Activated T-helper 1 cell treated with anti-CD3 and anti-CD28 coated beads, Interleukin-12 subunit alpha, Interleukin-12 subunit beta, Interleukin-2, Interleukin-4 antibody, amounts not matched to agents 30 ng/mL and 10 ng/mL and 1 ng/mL, durations not matched to agents 14 hours and 24 hours and 36 hours (primary cell): ENCODE measurements at regions of chr16 and their contacts with region 1.

Region 1: GRCh38 chr16:4475880-4476788 is at the start of gene HMOX2:
- DNase-seq: peak; percentile 93
- H3K4me3 Mint-ChIP-seq: peak within 1 kb of the TSS; percentile 89
- H3K27ac Mint-ChIP-seq: peak within 1 kb of the TSS; percentile 89
- H3K4me1 Mint-ChIP-seq: peaks cover 21% of the 10 kb centered on the region
- H3K27me3 Mint-ChIP-seq: no peaks in the 10 kb centered on the region
- total RNA-seq, gene HMOX2: 64.7 and 68.4 TPM in 2 replicates

Region 2: GRCh38 chr16:4081521-4082021 is 394.6 kb before region 1 on chr16:
- intact Hi-C with region 1: no loop called
- DNase-seq: no peak
- H3K4me3 Mint-ChIP-seq: peak overlapping the region; percentile 54
- H3K27ac Mint-ChIP-seq: no peak overlapping the region
- H3K4me1 Mint-ChIP-seq: peaks cover 56% of the 10 kb centered on the region
- H3K27me3 Mint-ChIP-seq: no peaks in the 10 kb centered on the region

Region 3: DNA sequence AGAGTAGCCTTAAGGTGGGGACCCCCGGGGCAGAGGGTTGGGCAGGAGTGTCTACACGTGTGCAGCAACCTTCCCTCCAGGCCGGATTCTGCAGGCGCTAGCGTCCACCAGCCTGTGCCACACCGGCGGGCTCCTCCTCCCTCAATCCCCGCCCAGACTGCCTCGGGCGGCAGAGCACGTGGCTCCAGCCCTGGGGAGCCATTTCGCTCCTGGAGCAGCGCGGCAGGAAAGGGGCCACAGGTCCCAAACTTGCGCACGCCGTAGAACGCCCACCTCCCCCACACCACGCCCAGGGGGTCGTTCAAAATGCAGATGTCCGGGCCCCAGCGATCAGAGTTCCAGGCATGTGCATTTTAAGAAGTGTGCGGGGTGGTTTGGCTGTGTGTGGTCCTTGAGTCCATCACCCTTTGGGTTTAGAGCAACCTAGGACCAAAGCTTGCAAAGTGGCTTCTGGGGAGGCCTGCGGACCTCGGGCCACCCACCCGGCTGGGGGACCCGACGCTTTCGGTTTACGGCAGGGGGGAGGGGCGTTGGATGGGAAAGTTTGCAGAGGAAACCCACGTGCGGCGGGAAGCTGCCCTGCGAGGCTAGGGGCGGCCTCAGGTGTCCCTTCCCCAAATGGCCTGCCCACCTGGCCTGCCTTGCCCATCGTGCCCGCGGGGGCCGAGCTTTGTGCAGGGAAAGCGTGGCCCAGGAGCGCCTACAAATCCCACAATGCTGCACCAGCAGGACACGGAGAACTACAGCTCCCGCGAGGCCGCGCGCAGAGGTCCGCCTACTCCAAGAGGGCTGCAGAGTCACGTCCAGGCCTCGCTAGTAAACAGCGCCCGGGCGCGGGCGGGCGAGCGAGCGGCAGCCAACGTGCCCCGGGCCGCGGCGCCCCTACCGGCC is 204.7 kb before region 1 on chr16:
- intact Hi-C with region 1: loop called (anchors 5 kb)
- DNase-seq: peak; percentile 85
- H3K4me3 Mint-ChIP-seq: peak overlapping the region; percentile 88
- H3K27ac Mint-ChIP-seq: peak overlapping the region; percentile 94
- H3K4me1 Mint-ChIP-seq: peaks cover 7% of the 10 kb centered on the region
- H3K27me3 Mint-ChIP-seq: peaks cover 2% of the 10 kb centered on the region

Region 4: DNA sequence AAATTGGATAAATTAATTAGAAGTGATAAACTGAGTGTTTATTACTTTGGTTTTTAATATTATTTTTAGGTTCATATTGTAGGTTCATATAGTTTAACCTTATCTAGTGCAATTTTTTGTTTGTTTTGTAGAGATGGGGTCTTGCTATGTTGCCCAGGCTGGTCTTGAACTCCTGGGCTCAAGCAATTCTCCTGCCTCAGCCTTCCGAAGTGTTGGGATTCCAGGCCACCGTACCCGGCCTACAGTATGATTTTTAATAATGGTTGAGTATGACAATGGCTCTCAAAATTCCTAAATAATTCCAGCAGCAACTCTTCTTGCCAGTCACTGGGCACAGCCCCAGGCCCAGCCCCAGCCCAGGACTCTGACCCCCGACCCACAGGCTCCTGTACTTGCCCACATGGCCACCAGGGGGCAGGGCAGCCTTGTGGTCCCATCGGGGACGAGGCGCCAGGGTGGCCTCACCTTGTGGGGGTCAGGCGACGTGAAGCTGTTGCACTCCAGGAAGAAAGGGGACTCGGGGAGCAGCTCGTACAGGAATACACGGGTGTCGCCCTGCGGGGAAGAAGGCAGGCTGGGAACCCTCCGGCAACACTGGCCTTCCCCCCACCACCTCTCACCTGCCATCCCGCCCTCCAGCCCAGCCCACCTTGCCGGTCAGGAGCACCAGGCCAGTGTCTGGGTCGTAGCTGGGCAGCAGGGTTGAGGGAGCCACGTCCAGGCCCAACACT is 117.1 kb before region 1 on chr16:
- intact Hi-C with region 1: no loop called
- DNase-seq: peak; percentile 49
- H3K4me3 Mint-ChIP-seq: no peak overlapping the region
- H3K27ac Mint-ChIP-seq: peak overlapping the region; percentile 34
- H3K4me1 Mint-ChIP-seq: no peaks in the 10 kb centered on the region
- H3K27me3 Mint-ChIP-seq: no peaks in the 10 kb centered on the region

Region 5: DNA sequence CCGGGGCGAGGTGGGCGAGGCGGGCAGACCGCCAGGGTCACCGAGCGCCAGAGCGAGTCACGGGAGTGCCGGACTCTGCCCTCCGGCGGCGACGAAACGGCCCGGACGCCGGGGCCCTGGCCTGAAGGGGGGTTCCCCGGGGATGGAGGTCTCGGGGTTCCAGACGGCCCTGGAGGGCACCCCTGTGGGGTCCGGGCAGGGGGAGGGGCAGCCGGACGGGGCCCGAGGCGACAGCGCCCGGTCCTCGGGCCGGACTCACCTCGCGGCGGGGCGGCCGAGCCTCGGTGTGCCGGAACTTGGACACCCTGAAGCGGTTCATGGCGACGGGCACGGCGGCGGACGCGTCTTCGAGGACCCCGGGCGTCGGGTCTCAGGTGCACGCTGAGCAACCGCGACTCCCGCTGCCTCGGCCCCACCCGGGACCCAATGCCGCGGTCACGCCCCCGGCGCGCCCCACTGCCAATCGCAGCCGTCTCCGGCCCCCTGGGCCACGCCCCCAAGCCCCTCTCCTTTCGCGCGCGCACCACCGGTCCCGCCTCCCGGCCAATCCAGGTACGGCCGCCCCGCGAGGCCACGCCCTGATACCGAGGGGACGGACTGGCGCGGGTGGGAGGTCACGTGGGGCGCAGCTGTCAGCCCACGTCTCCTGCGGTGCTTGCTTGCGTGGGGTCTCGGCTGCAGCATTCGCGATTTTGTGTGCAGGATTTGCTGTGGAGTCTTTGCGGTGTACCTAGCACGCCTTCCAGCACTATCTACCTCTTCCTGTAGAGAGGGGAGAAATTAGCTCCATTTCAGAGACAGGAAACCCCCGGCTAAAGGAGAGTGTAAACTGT is 59.7 kb before region 1 on chr16 and contains the start of gene CORO7:
- intact Hi-C with region 1: loop called (anchors 1 kb)
- DNase-seq: peak; percentile 99
- H3K4me3 Mint-ChIP-seq: peak within 1 kb of the TSS; percentile 90
- H3K27ac Mint-ChIP-seq: peak within 1 kb of the TSS; percentile 92
- H3K4me1 Mint-ChIP-seq: peaks cover 16% of the 10 kb centered on the region
- H3K27me3 Mint-ChIP-seq: peaks cover 7% of the 10 kb centered on the region
- total RNA-seq, gene CORO7: 87.9 and 90.8 TPM in 2 replicates

Region 6: GRCh38 chr16:4461250-4462085 is 14.7 kb before region 1 on chr16:
- intact Hi-C with region 1: no loop called
- DNase-seq: no peak
- H3K4me3 Mint-ChIP-seq: no peak overlapping the region
- H3K27ac Mint-ChIP-seq: no peak overlapping the region
- H3K4me1 Mint-ChIP-seq: peaks cover 21% of the 10 kb centered on the region
- H3K27me3 Mint-ChIP-seq: no peaks in the 10 kb centered on the region

Region 7: DNA sequence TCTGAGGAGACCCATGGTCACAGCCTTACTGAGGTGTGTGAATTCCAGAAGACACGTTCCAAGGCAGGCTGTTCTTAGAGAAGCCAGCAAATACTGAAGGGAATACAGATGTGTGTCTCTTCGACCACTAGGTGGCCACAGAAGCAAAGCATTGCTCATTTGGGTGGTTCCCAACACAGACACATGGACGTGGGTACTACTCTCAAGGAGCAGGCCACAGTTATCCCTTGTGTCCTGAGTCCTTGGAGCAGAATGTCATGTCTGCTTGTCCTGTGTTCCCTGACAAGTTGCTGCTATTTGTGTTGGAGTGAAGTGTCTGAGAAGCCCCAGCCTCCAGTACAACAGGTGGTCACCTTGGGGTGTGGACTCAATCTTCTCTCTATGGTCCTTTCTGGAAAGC is 30.3 kb after region 1 on chr16:
- intact Hi-C with region 1: loop called (anchors 1 kb)
- DNase-seq: peak; percentile 51
- H3K4me3 Mint-ChIP-seq: peak overlapping the region; percentile 70
- H3K27ac Mint-ChIP-seq: peak overlapping the region; percentile 79
- H3K4me1 Mint-ChIP-seq: peaks cover 48% of the 10 kb centered on the region
- H3K27me3 Mint-ChIP-seq: no peaks in the 10 kb centered on the region

Region 8: GRCh38 chr16:4616047-4616811 is 140.1 kb after region 1 on chr16:
- intact Hi-C with region 1: loop called (anchors 1 kb)
- DNase-seq: peak; percentile 98
- H3K4me3 Mint-ChIP-seq: peak overlapping the region; percentile 95
- H3K27ac Mint-ChIP-seq: peak overlapping the region; percentile 98
- H3K4me1 Mint-ChIP-seq: peaks cover 16% of the 10 kb centered on the region
- H3K27me3 Mint-ChIP-seq: peaks cover 2% of the 10 kb centered on the region

Region 9: GRCh38 chr16:4846891-4847773 is 371.0 kb after region 1 on chr16 and contains the starts of genes GLYR1 and UBN1:
- intact Hi-C with region 1: loop called (anchors 2 kb)
- DNase-seq: peak; percentile 99
- H3K4me3 Mint-ChIP-seq: peak within 1 kb of the TSS; percentile 91
- H3K27ac Mint-ChIP-seq: peak within 1 kb of the TSS; percentile 80
- H3K4me1 Mint-ChIP-seq: peaks cover 56% of the 10 kb centered on the region
- H3K27me3 Mint-ChIP-seq: no peaks in the 10 kb centered on the region
- total RNA-seq, gene GLYR1: 119 and 120 TPM in 2 replicates
- total RNA-seq, gene UBN1: 39.6 and 42.6 TPM in 2 replicates